Posterior cingulate gyrus (tissue), 11 donors: ENCODE measurements at regions of chr3 and their contacts with region 1.

Region 1: GRCh38 chr3:179347345-179348194 is at the start of gene MFN1:
- DNase-seq: peak; percentile 90 to 99 (median 93)

Region 2: DNA sequence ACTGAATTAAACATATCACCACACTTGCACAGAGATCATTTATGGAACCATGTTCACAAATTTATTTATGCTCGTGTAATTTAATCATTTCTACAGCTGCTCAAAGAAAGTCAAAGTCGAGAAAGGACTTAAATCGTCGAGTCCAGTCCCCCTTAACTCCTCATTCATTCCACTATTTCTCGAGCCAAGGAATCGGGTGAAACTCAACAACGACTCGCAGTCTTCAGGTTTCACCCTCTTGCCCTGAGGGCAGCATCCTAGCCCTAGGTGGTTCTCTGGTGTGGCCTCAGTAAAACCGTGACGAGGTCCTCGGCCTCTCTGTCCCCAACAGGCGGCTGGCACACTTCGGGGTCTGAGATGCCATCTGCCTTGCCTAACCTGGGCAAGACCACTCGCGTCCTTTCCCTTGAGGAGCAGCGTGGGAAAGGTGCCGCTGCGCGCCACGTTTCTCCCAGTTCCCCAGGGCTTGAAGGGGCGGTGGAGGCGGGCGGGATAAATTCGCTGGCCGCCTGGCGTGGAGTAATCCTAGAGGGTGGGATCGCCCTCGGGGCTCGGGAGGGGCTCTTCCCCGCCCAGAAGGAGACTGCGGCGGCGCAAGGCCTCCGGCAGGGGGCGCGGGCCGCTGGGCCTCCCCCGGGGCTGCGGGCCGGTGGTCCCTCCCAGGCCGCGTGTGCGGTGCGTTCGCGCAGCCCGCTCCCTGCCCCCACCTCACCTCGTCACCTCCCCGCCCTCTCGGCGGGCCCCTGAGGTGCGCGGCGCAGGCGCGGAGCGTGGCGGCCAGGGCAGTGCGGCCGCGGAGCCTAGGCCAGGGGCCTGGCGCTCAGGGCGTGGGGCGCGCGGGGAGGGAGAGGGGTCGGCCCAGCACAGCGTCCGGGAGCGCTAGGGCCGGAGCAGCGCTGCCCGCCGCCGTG is 25.0 kb before region 1 on chr3 and contains the start of gene ZNF639:
- intact Hi-C with region 1: loop called (anchors 2 kb)
- DNase-seq: peak; percentile 52 to 96 (median 71)

Region 3: GRCh38 chr3:179562591-179563270 is 215.2 kb after region 1 on chr3 and contains the start of gene ACTL6A:
- intact Hi-C with region 1: loop called (anchors 5 kb)
- DNase-seq: peak; percentile 98 to 100 (median 99)

Region 4: GRCh38 chr3:179604321-179605078 is 256.9 kb after region 1 on chr3 and contains the starts of genes MRPL47 and NDUFB5:
- intact Hi-C with region 1: loop called (anchors 5 kb)
- DNase-seq: peak; percentile 92 to 99 (median 96)